ENCODE measurements at regions of chr5 and their contacts with region 1.

Region 1: DNA sequence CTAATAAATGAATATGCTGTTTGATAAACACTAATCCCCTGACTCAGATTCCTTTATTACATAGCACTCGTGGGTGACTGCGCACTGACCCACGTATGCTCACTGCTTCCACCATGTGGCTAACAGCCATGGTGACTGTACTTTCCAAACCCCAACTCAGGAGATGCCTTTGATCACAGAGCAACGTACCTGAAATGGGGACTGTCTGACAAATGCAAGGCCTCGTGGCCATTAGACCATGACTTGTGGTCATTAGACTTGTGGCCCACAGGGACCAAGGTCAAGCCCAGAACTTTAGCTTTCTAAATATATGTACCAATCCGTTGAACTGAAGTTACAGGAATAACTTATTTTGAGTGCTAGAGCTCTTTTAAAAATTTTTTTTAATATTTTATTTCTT is 46.6 kb downstream of the CYFIP2 start:
- DNase-seq: peak; percentile 82
- H3K4me3 ChIP-seq: no peak overlapping the region; a peak in 1 of 4 replicates
- H3K27ac ChIP-seq: no peak overlapping the region
- H3K4me1 ChIP-seq: peaks cover 0 to 3% of the 10 kb centered on the region in 2 experiments; a peak in 1 of 4 replicates
- H3K27me3 ChIP-seq: no peaks in the 10 kb centered on the region
- CTCF ChIP-seq: peak; percentile 80
- EP300 ChIP-seq: no peak
- RAD21 ChIP-seq: peak; percentile 76

Region 2: DNA sequence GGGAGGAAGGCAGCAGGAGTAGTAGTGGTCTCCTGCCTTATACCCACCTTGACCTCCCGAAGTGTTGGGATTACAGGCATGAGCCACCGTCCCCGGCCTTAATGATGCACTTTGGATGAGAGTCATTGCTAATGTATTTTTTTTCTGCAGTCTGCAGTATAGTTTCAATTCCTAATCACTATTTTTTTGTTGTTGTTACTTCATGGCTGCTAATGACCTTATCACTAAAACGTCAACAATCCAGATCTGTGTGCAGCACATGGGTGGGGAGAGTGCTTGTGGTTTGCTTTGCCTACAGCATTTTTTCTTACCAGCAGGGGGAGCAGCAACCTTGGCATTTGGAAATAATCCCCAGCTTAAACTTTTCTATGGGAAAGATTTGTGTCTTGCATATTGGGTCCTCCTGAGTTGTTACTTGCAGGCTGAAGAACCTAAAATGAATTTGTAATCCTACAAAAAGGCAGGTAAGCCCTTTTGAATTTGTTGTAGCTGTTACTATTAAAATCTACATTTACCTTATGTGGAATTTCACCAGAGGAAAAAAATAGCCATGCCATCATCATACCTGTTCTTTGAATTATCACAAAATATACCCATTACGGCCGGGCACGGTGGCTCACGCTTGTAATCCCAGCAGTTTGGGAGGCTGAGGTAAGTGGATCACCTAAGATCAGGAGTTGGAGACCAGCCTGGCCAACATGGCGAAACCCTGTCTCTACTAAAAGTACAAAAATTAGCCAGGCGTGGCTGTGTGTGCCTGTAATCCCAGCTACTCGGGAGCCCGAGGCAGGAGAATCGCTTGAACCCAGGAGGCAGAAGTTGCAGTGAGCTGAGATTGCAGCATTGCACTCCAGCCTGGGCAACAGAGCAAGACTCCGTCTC is 163.5 kb before region 1 on chr5:
- CTCF ChIA-PET with region 1: interaction called, 18 read pairs
- POLR2A ChIA-PET with region 1: no interaction called
- DNase-seq: peak; percentile 65
- H3K4me3 ChIP-seq: no peak overlapping the region; a peak in 1 of 4 replicates
- H3K27ac ChIP-seq: no peak overlapping the region
- H3K4me1 ChIP-seq: 0 out of 4 replicates have a peak, but pooled peaks cover 0 to 1% of the 10 kb centered on the region in 2 experiments
- H3K27me3 ChIP-seq: no peaks in the 10 kb centered on the region; the same call in 1 of the 2 replicates
- CTCF ChIP-seq: peak; percentile 95
- EP300 ChIP-seq: no peak
- RAD21 ChIP-seq: peak; percentile 83

Region 3: GRCh38 chr5:157245477-157245876 is 67.0 kb before region 1 on chr5:
- CTCF ChIA-PET with region 1: interaction called, 13 read pairs
- POLR2A ChIA-PET with region 1: no interaction called
- DNase-seq: no peak
- H3K4me3 ChIP-seq: no peak overlapping the region
- H3K27ac ChIP-seq: no peak overlapping the region
- H3K4me1 ChIP-seq: no peaks in the 10 kb centered on the region; a peak in 1 of 4 replicates
- H3K27me3 ChIP-seq: no peaks in the 10 kb centered on the region
- CTCF ChIP-seq: no peak
- EP300 ChIP-seq: no peak
- RAD21 ChIP-seq: no peak

Region 4: DNA sequence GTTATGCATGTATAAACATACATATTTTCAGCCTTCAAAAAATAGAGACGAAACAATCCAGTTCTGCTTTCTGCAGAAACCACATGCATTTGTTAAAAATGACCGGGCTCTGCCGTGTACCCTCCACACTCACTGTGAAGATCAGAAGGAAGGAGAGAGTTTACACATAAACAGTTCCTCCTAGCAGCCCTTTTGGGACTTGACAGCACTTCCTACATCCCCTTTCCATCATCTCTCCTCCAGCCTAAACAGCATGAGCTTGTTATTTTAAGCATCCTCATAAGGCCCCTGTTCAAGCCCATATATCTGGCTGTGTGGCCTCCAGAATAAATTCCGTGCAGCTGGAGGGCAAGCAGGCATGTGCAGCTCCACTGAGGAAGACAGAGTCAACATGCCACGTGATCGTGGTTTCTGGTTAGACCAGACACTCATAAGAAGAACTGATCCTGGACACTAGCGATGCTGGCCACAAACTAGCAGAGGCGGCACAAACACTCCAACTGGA is 189.7 kb after region 1 on chr5:
- CTCF ChIA-PET with region 1: no interaction called
- POLR2A ChIA-PET with region 1: no interaction called
- DNase-seq: no peak
- H3K4me3 ChIP-seq: no peak overlapping the region
- H3K27ac ChIP-seq: no peak overlapping the region
- H3K4me1 ChIP-seq: peaks cover 0 to 14% of the 10 kb centered on the region in 2 experiments; a peak in 1 of 4 replicates
- H3K27me3 ChIP-seq: no peaks in the 10 kb centered on the region
- CTCF ChIP-seq: no peak
- EP300 ChIP-seq: no peak
- RAD21 ChIP-seq: no peak

Measured in SK-N-SH (cell line).